ENCODE measurements at regions of chr10 and their contacts with region 1.

Region 1: GRCh38 chr10:110363572-110364411 is 59.1 kb upstream of the SMNDC1 start:
- DNase-seq: peak; percentile 14 to 81 (median 45)

Region 2: DNA sequence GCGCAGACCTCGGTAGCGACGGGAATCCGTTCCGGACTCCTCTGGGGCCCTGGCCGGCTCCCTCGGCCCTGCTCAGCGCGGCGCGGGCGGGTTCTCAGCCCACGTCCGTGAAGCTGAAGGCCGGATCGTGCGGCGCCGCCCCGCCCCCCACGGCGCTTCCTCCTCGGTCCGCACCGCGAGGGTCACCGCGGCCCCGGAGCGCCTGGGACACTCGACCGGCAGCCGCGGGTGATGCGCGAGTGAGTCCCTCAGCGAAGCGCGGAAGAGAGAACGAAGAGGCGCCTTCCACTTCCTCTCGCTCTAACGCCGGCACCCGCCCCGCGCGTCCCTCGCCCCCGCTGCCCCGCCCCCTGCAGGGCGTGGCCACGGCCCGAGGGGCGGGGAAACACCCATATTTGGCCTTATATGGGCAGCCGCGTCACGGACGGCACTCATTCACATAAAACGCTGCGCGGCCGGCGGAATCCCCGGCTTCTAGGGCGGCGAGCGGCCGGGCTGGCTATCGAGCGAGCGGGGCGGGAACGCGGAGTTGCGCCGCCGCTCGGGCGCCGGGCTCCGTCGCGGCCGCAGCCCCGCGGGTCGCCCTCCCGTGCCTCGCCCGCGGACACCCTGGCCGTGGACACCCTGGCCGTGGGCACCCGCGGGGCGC is 133.8 kb after region 1 on chr10 and contains the start of gene DUSP5:
- intact Hi-C with region 1: loop called (anchors 5 kb)
- DNase-seq: peak; percentile 84 to 96 (median 92)

Region 3: DNA sequence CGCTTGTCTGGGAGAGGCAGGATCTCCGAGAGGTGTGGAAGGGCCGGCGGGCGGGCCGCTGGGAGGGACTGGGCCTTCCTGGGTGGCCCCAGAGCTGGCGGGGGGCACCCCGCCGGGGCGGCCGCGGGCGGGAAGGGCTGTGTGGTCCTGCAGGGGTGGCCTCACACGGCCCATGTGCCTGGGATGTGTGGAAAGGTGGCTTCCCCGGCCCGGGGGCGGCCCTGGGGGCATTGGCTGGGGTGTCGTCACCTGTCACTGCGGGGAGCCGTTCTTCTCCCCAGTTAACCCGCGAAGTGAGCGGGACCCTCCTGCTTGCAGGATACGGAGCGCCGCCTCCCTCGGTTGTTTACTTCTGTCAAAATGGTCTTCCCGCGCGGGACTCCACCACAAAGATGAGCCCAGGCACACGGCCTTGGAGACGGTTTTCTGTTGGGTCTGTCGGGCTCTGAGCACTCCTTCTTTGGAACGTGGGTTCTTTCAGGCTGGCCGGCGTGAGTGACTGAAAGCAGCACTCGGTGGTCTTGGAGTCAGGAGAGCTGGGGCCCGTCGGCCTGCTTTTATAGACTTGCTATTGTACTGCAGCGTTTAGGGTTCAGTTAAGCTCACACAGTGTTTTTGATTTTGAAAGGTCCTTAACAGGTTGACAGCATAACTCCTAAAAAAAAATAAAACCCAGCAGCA is 204.4 kb after region 1 on chr10:
- intact Hi-C with region 1: no loop called
- DNase-seq: peak in 38 of 42 donors; percentile 17 to 69 (median 48)

Measured in head of caudate nucleus (tissue), 42 donors.